IMR-90 (cell line): ENCODE measurements at regions of chr17 and their contacts with region 1.

Region 1: GRCh38 chr17:79839363-79840268 is at the start of gene CBX4:
- DNase-seq: peak; percentile 90
- ATAC-seq: peak; percentile 85
- H3K4me3 ChIP-seq: peak within 1 kb of the TSS; percentile 79
- H3K27ac ChIP-seq: peak within 1 kb of the TSS; percentile 76
- H3K4me1 ChIP-seq: peaks cover 23% of the 10 kb centered on the region
- H3K27me3 ChIP-seq: peaks cover 40% of the 10 kb centered on the region
- CTCF ChIP-seq: peak; percentile 70
- POLR2A ChIP-seq: peak; percentile 92
- RAD21 ChIP-seq: peak; percentile 35
- total RNA-seq, gene CBX4: 3.2 and 5.3 TPM in 2 replicates

Region 2: GRCh38 chr17:79658811-79659207 is 180.8 kb before region 1 on chr17:
- CTCF ChIA-PET with region 1: no interaction called
- POLR2A ChIA-PET with region 1: no interaction called
- dilution Hi-C with region 1: no loop called
- in situ Hi-C with region 1: no loop called
- intact Hi-C with region 1: no loop called
- DNase-seq: peak; percentile 21
- ATAC-seq: peak; percentile 40; the same call in 1 of the 2 replicates
- H3K4me3 ChIP-seq: no peak overlapping the region
- H3K27ac ChIP-seq: no peak overlapping the region
- H3K4me1 ChIP-seq: no peaks in the 10 kb centered on the region
- H3K27me3 ChIP-seq: peaks cover 17% of the 10 kb centered on the region
- CTCF ChIP-seq: peak; percentile 30; the same call in 1 of the 2 replicates
- POLR2A ChIP-seq: no peak
- RAD21 ChIP-seq: no peak

Region 3: DNA sequence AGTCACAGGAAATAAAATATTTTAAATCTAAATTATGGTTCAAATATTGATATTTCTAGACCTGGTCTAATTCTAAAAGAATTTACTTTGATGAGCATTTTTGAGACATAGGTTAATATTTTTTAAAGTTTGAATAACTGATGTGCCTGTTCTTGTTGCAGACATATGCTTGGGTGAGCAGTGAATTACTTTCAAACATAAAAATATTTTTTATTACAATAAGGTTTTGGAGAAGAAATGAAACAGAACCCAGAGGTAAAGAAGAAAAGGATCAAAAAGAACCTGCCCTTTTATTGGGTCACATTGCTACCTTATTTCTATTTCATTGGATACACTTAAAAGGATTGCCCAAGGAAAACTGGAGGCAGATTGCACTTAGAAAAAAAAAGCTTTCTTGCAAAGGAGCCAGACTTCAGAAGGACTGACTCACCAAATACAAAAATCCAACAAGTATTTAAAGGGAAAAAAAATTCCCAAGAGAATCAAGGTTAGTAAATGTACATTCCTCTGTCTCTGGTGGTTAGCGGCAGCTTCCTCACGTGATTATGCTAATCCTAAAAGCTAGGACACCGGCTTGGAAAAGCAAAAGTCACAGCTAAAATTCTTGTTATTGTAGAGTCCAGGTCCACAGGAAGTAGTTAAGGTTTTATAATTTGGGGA is 90.3 kb before region 1 on chr17:
- CTCF ChIA-PET with region 1: no interaction called
- POLR2A ChIA-PET with region 1: no interaction called
- dilution Hi-C with region 1: no loop called
- in situ Hi-C with region 1: no loop called
- intact Hi-C with region 1: loop called (anchors 5 kb)
- DNase-seq: peak; percentile 73
- ATAC-seq: peak; percentile 55
- H3K4me3 ChIP-seq: no peak overlapping the region
- H3K27ac ChIP-seq: no peak overlapping the region
- H3K4me1 ChIP-seq: peaks cover 3% of the 10 kb centered on the region; the same call in 1 of the 2 replicates
- H3K27me3 ChIP-seq: peaks cover 49% of the 10 kb centered on the region
- CTCF ChIP-seq: no peak
- POLR2A ChIP-seq: no peak
- RAD21 ChIP-seq: no peak

Region 4: GRCh38 chr17:79789534-79790353 is 49.9 kb before region 1 on chr17:
- CTCF ChIA-PET with region 1: interaction called, 5 read pairs
- POLR2A ChIA-PET with region 1: no interaction called
- dilution Hi-C with region 1: no loop called
- in situ Hi-C with region 1: no loop called
- intact Hi-C with region 1: loop called (anchors 1 kb)
- DNase-seq: no peak
- ATAC-seq: peak; percentile 37
- H3K4me3 ChIP-seq: no peak overlapping the region; the same call in 1 of the 2 replicates
- H3K27ac ChIP-seq: no peak overlapping the region
- H3K4me1 ChIP-seq: peaks cover 7% of the 10 kb centered on the region
- H3K27me3 ChIP-seq: peaks cover 37% of the 10 kb centered on the region
- CTCF ChIP-seq: peak; percentile 81
- POLR2A ChIP-seq: no peak
- RAD21 ChIP-seq: peak; percentile 84

Region 5: DNA sequence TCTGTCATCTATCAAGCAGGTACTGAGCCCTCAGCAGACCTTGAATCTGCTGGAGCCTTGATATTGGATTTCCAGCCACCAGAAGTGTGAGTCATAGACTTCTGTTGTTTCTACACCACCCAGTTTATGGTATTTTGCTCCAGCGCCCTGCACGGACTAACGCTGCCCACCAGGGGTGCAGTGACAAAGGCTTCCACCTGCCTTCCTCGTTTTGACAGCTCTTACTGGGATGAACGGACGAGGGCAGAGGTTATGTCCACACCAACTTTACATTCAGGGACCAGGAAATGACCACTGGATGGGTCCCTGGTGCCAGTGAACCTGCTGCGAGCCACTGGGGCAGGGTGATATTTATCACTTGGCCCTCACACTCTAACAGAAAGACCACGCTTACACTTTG is 66.2 kb after region 1 on chr17:
- CTCF ChIA-PET with region 1: no interaction called
- POLR2A ChIA-PET with region 1: interaction called, 11 read pairs
- dilution Hi-C with region 1: no loop called
- in situ Hi-C with region 1: no loop called
- intact Hi-C with region 1: no loop called
- DNase-seq: no peak
- ATAC-seq: no peak
- H3K4me3 ChIP-seq: no peak overlapping the region
- H3K27ac ChIP-seq: no peak overlapping the region
- H3K4me1 ChIP-seq: no peaks in the 10 kb centered on the region
- H3K27me3 ChIP-seq: peaks cover 48% of the 10 kb centered on the region
- CTCF ChIP-seq: no peak
- POLR2A ChIP-seq: no peak
- RAD21 ChIP-seq: no peak

Region 6: DNA sequence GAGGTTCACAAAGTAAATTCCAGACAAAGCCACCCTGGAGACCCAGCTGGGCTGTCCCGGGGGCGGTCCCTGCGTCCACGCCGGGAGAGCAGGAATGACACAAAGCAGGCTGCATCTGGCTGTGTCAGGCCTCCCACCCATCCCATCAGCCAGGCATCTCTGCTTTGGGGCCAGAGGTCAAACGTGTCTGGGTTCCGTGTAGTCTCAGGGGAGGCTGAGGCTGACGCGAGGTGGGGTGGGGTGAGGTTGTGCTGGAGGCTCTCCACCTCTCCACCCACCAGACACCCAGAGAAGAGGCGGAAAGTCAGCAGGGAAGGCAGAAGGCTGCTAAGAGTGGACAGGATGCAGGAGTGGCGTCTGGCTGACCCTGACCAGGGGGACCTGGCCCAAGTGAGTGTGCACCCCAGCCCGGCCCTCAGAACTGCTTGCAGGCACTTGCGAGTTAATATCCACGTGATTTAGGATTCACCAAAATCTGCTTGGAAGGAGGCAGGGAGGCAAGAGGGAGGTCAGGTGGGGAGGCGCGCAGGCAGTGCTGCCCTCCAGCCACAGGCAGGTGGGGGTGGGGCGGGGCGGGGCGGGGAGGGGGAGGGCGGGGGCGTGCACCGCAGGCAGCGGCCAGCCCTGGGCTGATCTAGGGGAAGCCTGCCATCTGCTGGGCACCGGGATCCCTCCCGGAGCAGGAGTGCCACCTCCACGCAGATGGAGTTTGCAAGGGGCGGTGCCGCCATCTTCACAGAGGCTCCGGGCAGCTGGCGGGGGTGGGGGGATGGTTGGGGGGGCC is 151.7 kb after region 1 on chr17:
- CTCF ChIA-PET with region 1: interaction called, 12 read pairs
- POLR2A ChIA-PET with region 1: no interaction called
- dilution Hi-C with region 1: no loop called
- in situ Hi-C with region 1: loop called (anchors 10 kb)
- intact Hi-C with region 1: loop called (anchors 1 kb)
- DNase-seq: peak; percentile 74
- ATAC-seq: peak; percentile 73
- H3K4me3 ChIP-seq: peak overlapping the region; percentile 9; the same call in 1 of the 2 replicates
- H3K27ac ChIP-seq: no peak overlapping the region
- H3K4me1 ChIP-seq: peaks cover 41% of the 10 kb centered on the region
- H3K27me3 ChIP-seq: no peaks in the 10 kb centered on the region
- CTCF ChIP-seq: peak; percentile 71
- POLR2A ChIP-seq: no peak
- RAD21 ChIP-seq: peak; percentile 77